ENCODE measurements at regions of chr14 and their contacts with region 1.

Region 1: GRCh38 chr14:35292051-35292769 is at the start of gene PSMA6:
- DNase-seq: peak; percentile 98 to 99
- ATAC-seq: peak; percentile 95 to 96
- H3K4me3 ChIP-seq: peak within 1 kb of the TSS; percentile 84 to 94 (median 89)
- H3K27ac ChIP-seq: peak within 1 kb of the TSS; percentile 96 to 98 (median 96)
- H3K4me1 ChIP-seq: peaks cover 32 to 39% of the 10 kb centered on the region in 2 donors
- H3K27me3 ChIP-seq: no peaks in the 10 kb centered on the region
- CTCF ChIP-seq: no peak
- POLR2A ChIP-seq: peak; percentile 91
- total RNA-seq, gene PSMA6: 323 to 502 (median 464) TPM

Region 2: GRCh38 chr14:34982417-34983147 is 309.6 kb before region 1 on chr14 and contains the start of gene SRP54:
- in situ Hi-C with region 1: no loop called
- intact Hi-C with region 1: loop called (anchors 1 kb)
- DNase-seq: peak; percentile 98 to 99
- ATAC-seq: peak; percentile 98 to 99
- H3K4me3 ChIP-seq: peak within 1 kb of the TSS; percentile 79 to 90 (median 80)
- H3K27ac ChIP-seq: peak within 1 kb of the TSS; percentile 83 to 95 (median 93)
- H3K4me1 ChIP-seq: peaks cover 28 to 36% of the 10 kb centered on the region in 2 donors
- H3K27me3 ChIP-seq: no peaks in the 10 kb centered on the region
- CTCF ChIP-seq: peak in 1 of 5 experiments; percentile 24
- POLR2A ChIP-seq: peak; percentile 74 to 86
- total RNA-seq, gene SRP54: 33.7 to 40.0 (median 34.6) TPM

Region 3: DNA sequence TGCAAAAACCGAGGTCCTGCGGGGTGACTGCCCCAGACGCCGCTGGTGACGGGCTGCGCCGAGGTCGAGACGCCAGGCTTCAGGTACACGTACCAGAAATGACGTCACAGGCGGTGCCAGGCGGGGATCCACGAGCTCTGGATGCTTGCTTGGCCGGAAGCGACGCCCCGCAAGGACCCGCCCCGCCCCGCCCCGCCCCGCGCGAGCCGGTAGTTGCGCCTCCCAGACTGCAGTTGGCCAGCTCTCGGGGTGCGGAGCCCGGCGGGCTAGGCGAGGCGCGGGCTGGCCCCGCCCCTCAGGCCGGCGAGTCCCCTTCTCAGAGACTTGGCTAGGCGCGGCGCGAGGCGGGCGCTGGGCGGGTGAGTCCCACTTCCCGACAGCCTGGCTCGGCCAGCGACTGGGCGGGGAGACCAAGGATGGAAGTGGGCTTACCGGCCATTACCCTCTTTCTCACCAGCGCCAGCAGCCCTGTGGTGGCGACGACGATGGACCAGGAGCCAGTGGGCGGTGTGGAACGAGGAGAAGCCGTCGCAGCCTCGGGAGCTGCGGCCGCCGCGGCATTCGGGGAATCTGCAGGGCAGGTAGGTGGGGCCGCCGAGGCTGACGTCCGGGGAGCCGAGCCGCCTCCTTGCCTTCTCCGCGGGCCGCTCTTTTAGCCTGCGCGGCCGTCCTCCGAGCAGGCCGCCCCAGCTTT is 246.0 kb before region 1 on chr14 and contains the start of gene FAM177A1:
- in situ Hi-C with region 1: no loop called
- intact Hi-C with region 1: loop called (anchors 10 kb)
- DNase-seq: peak; percentile 95 to 97
- ATAC-seq: peak; percentile 81 to 90
- H3K4me3 ChIP-seq: peak within 1 kb of the TSS; percentile 77 to 94 (median 88)
- H3K27ac ChIP-seq: peak within 1 kb of the TSS; percentile 90 to 98 (median 94)
- H3K4me1 ChIP-seq: peaks cover 37 to 40% of the 10 kb centered on the region in 2 donors
- H3K27me3 ChIP-seq: no peaks in the 10 kb centered on the region
- CTCF ChIP-seq: no peak
- POLR2A ChIP-seq: peak; percentile 91 to 94
- total RNA-seq, gene FAM177A1: 13.5 to 35.8 (median 21.8) TPM

Region 4: DNA sequence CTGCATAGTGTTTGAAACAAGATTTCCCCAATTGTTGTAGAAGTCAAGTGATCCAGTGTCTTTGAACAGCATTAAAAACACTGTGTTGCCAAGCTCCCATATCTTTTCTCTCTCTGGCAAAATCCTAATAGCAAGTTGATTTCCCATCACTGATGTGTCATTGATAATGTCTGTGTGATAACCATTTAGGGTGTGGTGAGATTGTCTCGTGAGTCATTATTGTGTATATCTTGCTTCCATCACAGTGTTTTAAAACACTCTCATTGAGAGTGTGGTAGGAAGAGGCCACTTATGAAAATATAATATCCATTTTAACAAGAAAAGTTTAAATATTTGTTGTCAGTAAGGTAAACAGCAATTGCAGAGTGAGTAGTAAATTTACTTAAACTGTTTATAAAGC is 95.2 kb before region 1 on chr14:
- in situ Hi-C with region 1: no loop called
- intact Hi-C with region 1: no loop called
- DNase-seq: no peak
- ATAC-seq: no peak
- H3K4me3 ChIP-seq: no peak overlapping the region
- H3K27ac ChIP-seq: no peak overlapping the region
- H3K4me1 ChIP-seq: no peaks in the 10 kb centered on the region
- H3K27me3 ChIP-seq: no peaks in the 10 kb centered on the region
- CTCF ChIP-seq: no peak
- POLR2A ChIP-seq: no peak

Region 5: GRCh38 chr14:35341446-35342159 is 49.4 kb after region 1 on chr14:
- in situ Hi-C with region 1: no loop called
- intact Hi-C with region 1: loop called (anchors 2 kb)
- DNase-seq: peak; percentile 93 to 98
- ATAC-seq: peak; percentile 78 to 81
- H3K4me3 ChIP-seq: peak overlapping the region; percentile 47 to 57 (median 50)
- H3K27ac ChIP-seq: peak overlapping the region; percentile 94 to 99 (median 96)
- H3K4me1 ChIP-seq: peaks cover 30 to 34% of the 10 kb centered on the region in 2 donors
- H3K27me3 ChIP-seq: no peaks in the 10 kb centered on the region
- CTCF ChIP-seq: no peak
- POLR2A ChIP-seq: peak; percentile 61 to 71

Region 6: GRCh38 chr14:35384455-35385041 is 92.3 kb after region 1 on chr14:
- in situ Hi-C with region 1: no loop called
- intact Hi-C with region 1: loop called (anchors 1 kb)
- DNase-seq: peak; percentile 77 to 92
- ATAC-seq: peak; percentile 75 to 84
- H3K4me3 ChIP-seq: peak overlapping the region; percentile 8 to 14 (median 11)
- H3K27ac ChIP-seq: peak overlapping the region; percentile 86 to 93 (median 90)
- H3K4me1 ChIP-seq: peaks cover 37 to 50% of the 10 kb centered on the region in 2 donors
- H3K27me3 ChIP-seq: no peaks in the 10 kb centered on the region
- CTCF ChIP-seq: peak in 4 of 5 experiments; percentile 50 to 59 (median 54)
- POLR2A ChIP-seq: peak; percentile 39 to 67

Region 7: DNA sequence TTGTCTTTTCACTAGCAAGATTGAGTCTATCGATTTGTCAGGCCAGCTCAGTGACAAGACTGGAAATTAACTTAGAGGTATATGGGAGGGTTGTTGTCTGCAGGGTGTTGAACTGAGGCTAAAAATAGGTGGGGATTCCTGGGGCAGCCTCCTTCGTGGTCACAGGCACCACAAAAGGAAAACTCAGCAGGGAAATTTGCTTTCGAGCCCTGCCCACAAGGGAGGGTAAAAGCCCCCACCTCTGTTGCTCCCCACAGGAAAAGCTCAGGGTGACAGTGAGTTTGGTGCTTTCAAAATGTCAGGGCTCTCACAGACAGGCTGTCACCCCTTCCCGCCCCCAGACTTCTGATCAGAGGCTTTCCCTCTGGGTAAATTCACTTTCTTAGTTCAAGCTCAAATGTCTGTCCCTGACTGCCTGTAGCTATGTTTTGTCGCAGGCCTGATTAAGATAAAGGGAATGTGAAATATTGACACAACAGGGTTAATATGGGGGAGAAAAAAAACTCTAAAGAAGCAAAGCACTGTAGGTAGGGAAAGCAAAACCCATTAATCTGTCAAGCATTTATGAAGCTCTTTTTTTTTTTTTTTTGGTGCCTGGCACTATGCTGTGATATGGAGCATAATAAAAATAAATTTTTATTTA is 124.0 kb after region 1 on chr14:
- in situ Hi-C with region 1: no loop called
- intact Hi-C with region 1: loop called (anchors 1 kb)
- DNase-seq: no peak
- ATAC-seq: no peak
- H3K4me3 ChIP-seq: no peak overlapping the region
- H3K27ac ChIP-seq: no peak overlapping the region
- H3K4me1 ChIP-seq: peaks cover 6 to 13% of the 10 kb centered on the region in 2 donors
- H3K27me3 ChIP-seq: no peaks in the 10 kb centered on the region
- CTCF ChIP-seq: no peak
- POLR2A ChIP-seq: no peak

Region 8: GRCh38 chr14:35808076-35808652 is 516.0 kb after region 1 on chr14:
- in situ Hi-C with region 1: no loop called
- intact Hi-C with region 1: loop called (anchors 10 kb)
- DNase-seq: peak in 1 of 2 donors; percentile 14
- ATAC-seq: peak; percentile 34 to 59
- H3K4me3 ChIP-seq: peak overlapping the region; percentile 56 to 89 (median 74)
- H3K27ac ChIP-seq: peak overlapping the region; percentile 85 to 94 (median 88)
- H3K4me1 ChIP-seq: peaks cover 20 to 22% of the 10 kb centered on the region in 2 donors
- H3K27me3 ChIP-seq: no peaks in the 10 kb centered on the region
- CTCF ChIP-seq: no peak
- POLR2A ChIP-seq: no peak